ENCODE measurements at regions of chr15 and their contacts with region 1.

Region 1: DNA sequence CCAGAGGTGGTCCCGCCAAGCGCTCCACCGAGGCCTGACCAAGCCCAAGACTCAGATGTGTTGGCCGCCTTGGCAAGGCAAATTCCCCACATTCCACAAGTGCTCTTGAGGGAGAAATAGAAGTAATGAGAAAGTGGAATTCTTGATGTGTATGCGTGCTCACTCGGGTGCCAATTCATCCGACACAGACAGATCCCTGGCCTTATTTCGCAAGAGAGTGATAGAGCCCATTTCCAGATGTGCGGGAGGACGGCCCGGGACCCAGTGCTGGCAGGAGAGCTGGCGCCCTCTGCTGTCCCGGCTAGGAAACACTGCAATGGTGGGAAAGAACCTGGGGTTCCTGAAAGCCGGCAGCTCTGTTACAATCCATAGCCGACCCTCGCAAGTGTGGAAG is 76.0 kb downstream of the HMG20A start:
- DNase-seq: peak; percentile 54
- H3K4me3 Mint-ChIP-seq: no peak overlapping the region
- H3K27ac Mint-ChIP-seq: no peak overlapping the region
- H3K4me1 Mint-ChIP-seq: peaks cover 20% of the 10 kb centered on the region
- H3K27me3 Mint-ChIP-seq: no peaks in the 10 kb centered on the region

Region 2: GRCh38 chr15:77118882-77119321 is 377.8 kb before region 1 on chr15:
- intact Hi-C with region 1: loop called (anchors 1 kb)
- DNase-seq: peak; percentile 15
- H3K4me3 Mint-ChIP-seq: no peak overlapping the region
- H3K27ac Mint-ChIP-seq: no peak overlapping the region
- H3K4me1 Mint-ChIP-seq: peaks cover 4% of the 10 kb centered on the region
- H3K27me3 Mint-ChIP-seq: peaks cover 6% of the 10 kb centered on the region

Region 3: GRCh38 chr15:77305953-77306352 is 190.8 kb before region 1 on chr15:
- intact Hi-C with region 1: loop called (anchors 10 kb)
- DNase-seq: no peak
- H3K4me3 Mint-ChIP-seq: no peak overlapping the region
- H3K27ac Mint-ChIP-seq: no peak overlapping the region
- H3K4me1 Mint-ChIP-seq: peaks cover 18% of the 10 kb centered on the region
- H3K27me3 Mint-ChIP-seq: peaks cover 12% of the 10 kb centered on the region

Region 4: GRCh38 chr15:77759896-77760592 is 263.3 kb after region 1 on chr15:
- intact Hi-C with region 1: no loop called
- DNase-seq: no peak
- H3K4me3 Mint-ChIP-seq: no peak overlapping the region
- H3K27ac Mint-ChIP-seq: no peak overlapping the region
- H3K4me1 Mint-ChIP-seq: no peaks in the 10 kb centered on the region
- H3K27me3 Mint-ChIP-seq: peaks cover 4% of the 10 kb centered on the region

Measured in activated T-helper 1 cell treated with anti-CD3 and anti-CD28 coated beads, Interleukin-12 subunit alpha, Interleukin-12 subunit beta, Interleukin-2, Interleukin-4 antibody, amounts not matched to agents 30 ng/mL and 10 ng/mL and 1 ng/mL, durations not matched to agents 14 hours and 24 hours and 36 hours (primary cell).